HCT116 (cell line): ENCODE measurements at regions of chr20 and their contacts with region 1.

Region 1: DNA sequence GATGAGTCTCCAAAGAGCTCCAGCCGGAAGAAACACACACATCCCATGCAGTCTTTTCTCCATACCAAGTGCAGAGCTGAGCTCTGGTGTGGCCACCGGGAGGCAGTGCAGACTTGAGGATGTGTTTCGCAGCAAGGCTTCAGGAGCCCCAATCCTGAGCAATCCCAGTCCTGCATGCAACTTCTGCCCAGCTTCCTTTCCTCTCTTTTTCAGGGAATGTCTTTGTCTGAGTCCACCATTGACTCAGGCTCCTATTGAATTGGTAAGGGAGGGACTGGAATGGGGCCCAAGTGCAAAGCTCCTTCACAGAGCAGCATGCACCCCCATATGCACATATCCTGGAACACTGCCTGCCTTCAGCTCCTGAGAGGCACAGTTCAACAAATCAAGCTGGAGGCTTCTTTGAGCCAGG is 50.5 kb upstream of the ASIP start:
- DNase-seq: peak; percentile 67
- ATAC-seq: peak; percentile 100
- H3K4me3 ChIP-seq: no peak overlapping the region
- H3K27ac ChIP-seq: no peak overlapping the region
- H3K4me1 ChIP-seq: no peaks in the 10 kb centered on the region
- H3K27me3 ChIP-seq: no peaks in the 10 kb centered on the region
- CTCF ChIP-seq: peak; percentile 70 to 95 (median 88); a peak in 5 of 6 replicates
- POLR2A ChIP-seq: no peak
- RAD21 ChIP-seq: peak; percentile 95

Region 2: DNA sequence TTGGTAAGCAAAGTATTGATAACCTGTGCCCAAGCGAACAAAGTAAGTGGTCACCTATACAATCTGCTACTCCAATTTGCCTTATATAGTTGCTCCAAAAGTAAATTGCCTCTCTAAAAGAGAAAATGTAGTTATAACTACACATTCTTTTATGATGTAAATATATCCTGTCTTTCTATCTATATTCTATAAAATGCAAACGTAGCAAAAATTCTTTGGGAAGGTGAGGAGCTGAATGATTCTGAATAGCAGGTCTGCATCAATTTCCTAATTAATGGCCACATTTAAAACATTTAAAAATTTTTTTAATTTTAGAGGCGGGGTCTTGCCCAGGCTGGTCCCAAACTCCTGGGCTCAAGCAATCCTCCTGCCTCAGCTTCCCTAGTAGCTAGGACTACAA is 13.6 kb before region 1 on chr20:
- CTCF ChIA-PET with region 1: interaction called, 10 read pairs
- POLR2A ChIA-PET with region 1: no interaction called
- RAD21 ChIA-PET with region 1: no interaction called
- intact Hi-C with region 1: no loop called
- DNase-seq: no peak
- ATAC-seq: no peak
- H3K4me3 ChIP-seq: no peak overlapping the region
- H3K27ac ChIP-seq: no peak overlapping the region
- H3K4me1 ChIP-seq: no peaks in the 10 kb centered on the region
- H3K27me3 ChIP-seq: no peaks in the 10 kb centered on the region
- CTCF ChIP-seq: no peak
- POLR2A ChIP-seq: no peak
- RAD21 ChIP-seq: no peak

Region 3: GRCh38 chr20:34254979-34255378 is 64.3 kb after region 1 on chr20:
- CTCF ChIA-PET with region 1: interaction called, 5 read pairs
- POLR2A ChIA-PET with region 1: no interaction called
- RAD21 ChIA-PET with region 1: interaction called, 3 to 6 read pairs
- intact Hi-C with region 1: loop called (anchors 5 kb)
- DNase-seq: no peak
- ATAC-seq: no peak
- H3K4me3 ChIP-seq: no peak overlapping the region
- H3K27ac ChIP-seq: no peak overlapping the region
- H3K4me1 ChIP-seq: no peaks in the 10 kb centered on the region
- H3K27me3 ChIP-seq: no peaks in the 10 kb centered on the region
- CTCF ChIP-seq: no peak
- POLR2A ChIP-seq: no peak
- RAD21 ChIP-seq: no peak

Region 4: DNA sequence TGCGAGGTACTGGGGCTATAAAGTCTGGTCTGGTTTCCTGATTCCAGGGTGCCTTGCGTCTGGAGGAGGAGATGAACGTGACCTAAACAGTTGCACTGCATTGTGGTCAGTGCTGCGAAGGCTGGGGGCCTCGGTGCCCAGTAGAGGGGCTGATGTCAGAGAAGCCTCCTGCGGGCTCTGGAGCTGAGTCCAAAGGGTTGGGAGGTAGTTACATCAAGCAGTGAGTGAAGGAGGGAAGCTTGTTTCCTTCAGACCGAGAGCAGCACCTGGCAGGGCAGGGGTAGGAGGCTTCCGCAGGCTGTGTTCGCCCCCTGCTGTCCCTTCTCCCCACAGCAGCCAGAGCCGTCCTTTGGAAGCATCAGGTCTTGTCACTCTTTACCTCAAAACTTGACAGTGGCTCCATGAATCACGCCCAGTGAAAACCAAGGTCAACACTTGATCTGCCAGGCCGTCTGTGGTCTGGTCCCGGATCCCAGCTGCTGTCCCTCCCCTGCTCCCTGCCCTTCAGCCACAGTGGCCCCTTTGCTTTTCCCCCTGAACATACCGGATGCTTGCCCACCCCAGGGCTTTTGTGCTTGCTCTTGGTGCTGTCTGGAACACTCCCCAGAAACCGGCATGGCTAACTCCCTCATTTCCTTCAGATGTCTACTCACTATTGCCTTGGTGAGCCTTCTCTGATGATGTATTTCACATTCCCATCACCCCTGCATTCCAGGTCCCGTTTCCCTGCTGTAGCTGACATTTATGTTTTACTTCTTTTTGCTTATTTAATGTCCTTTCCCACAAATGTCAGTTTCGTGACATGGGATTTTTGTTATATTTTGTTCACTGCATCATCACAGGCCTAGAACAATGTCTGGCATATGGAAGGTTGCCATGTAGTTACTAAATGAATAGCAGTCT is 332.5 kb after region 1 on chr20:
- CTCF ChIA-PET with region 1: interaction called, 7 read pairs
- POLR2A ChIA-PET with region 1: no interaction called
- RAD21 ChIA-PET with region 1: interaction called, 6 read pairs
- intact Hi-C with region 1: loop called (anchors 2 kb)
- DNase-seq: peak; percentile 42
- ATAC-seq: peak; percentile 64
- H3K4me3 ChIP-seq: no peak overlapping the region
- H3K27ac ChIP-seq: no peak overlapping the region
- H3K4me1 ChIP-seq: peaks cover 30 to 44% of the 10 kb centered on the region in 2 experiments
- H3K27me3 ChIP-seq: no peaks in the 10 kb centered on the region
- CTCF ChIP-seq: peak; percentile 83 to 84 (median 84)
- POLR2A ChIP-seq: no peak
- RAD21 ChIP-seq: peak; percentile 90

Region 5: GRCh38 chr20:34704177-34705007 is 513.7 kb after region 1 on chr20 and contains the start of gene TP53INP2:
- CTCF ChIA-PET with region 1: interaction called, 5 read pairs
- POLR2A ChIA-PET with region 1: no interaction called
- RAD21 ChIA-PET with region 1: no interaction called
- intact Hi-C with region 1: loop called (anchors 2 kb)
- DNase-seq: peak; percentile 74
- ATAC-seq: peak; percentile 61
- H3K4me3 ChIP-seq: peak within 1 kb of the TSS; percentile 57 to 77
- H3K27ac ChIP-seq: peak within 1 kb of the TSS; percentile 52; the same call in 1 of the 2 replicates
- H3K4me1 ChIP-seq: peaks cover 21 to 43% of the 10 kb centered on the region in 2 experiments
- H3K27me3 ChIP-seq: no peaks in the 10 kb centered on the region
- CTCF ChIP-seq: no peak
- POLR2A ChIP-seq: peak; percentile 10
- RAD21 ChIP-seq: no peak
- total RNA-seq, gene TP53INP2: 7.1 TPM